AG04450 (cell line): ENCODE measurements at regions of chr13 and their contacts with region 1.

Region 1: GRCh38 chr13:100922599-100922998 is 248.0 kb upstream of the TMTC4 start:
- DNase-seq: no peak
- H3K4me3 ChIP-seq: no peak overlapping the region
- H3K27ac ChIP-seq: no peak overlapping the region
- H3K27me3 ChIP-seq: no peaks in the 10 kb centered on the region
- CTCF ChIP-seq: no peak

Region 2: DNA sequence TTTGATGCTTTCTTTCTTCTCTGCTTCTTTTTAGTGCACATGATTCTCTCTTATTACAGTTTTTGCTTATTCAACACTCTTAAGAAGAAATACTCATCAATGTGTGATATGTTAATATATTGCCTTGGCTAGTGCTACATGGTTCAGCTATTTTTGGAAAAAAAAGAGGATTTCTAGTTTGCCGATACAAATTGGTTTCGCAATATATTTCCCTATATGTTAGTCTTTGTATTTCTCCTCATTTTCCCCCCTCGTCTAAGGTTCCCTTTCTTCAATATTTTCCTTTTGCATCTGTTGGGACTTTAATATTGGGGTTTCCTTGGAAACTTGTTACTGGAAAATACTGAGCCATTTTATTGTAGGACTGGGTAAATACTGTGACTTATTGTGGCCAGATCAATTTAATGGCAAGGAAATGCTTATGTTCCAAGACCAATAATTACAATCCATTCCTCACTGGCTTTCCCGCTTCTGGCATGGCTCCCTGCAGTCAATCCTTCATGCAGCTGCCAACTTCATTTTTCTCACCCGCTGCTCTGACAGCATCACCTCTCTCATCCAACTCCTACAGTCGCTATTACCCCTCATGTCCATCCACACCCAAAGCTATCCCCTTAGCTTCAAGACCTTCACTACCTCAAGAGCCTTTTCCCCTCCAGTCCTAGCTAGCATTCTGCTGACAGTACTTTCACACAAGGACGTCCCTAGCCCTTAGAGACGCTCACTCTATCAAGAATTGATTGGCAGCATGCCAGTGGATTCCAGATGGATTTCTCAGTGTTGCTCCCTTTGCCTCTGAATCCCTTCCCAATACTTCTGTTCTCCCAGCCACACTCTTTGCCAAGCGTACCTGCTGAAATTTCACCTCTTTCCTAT is 32.1 kb after region 1 on chr13:
- CTCF ChIA-PET with region 1: interaction called, 12 read pairs
- POLR2A ChIA-PET with region 1: no interaction called
- DNase-seq: no peak
- H3K4me3 ChIP-seq: no peak overlapping the region
- H3K27ac ChIP-seq: no peak overlapping the region
- H3K27me3 ChIP-seq: peaks cover 2% of the 10 kb centered on the region
- CTCF ChIP-seq: no peak